Esophagus muscularis mucosa (tissue), 4 donors: ENCODE measurements at regions of chr5 and their contacts with region 1.

Region 1: DNA sequence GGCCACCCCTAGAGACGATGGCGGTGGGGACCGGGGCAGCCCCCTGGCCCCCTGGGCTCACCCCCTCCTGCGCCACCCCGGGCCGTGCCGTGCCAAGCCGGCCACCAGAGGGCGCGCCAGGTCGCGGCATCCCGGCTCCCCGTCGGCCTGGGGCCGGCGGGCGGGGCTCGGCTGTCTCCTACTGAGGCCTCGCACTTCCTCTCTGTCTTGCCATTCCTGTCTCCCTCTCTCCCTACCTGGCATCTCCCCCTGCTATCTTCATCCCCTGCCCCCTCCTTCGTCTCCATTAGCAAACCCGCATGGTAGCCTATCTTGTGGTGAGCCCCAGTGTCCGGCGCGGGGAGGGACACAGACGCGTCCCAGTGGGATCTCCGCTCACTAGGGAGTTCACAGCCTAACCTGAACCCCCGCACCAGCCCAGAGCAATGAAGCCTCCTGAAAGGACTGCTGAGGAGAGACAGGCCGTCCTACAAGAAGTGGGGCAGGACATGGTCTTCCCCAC is 29.8 kb upstream of the FABP6 start:
- DNase-seq: no peak
- H3K4me3 ChIP-seq: peak overlapping the region; percentile 44 to 62 (median 52)
- H3K27ac ChIP-seq: no peak overlapping the region
- H3K4me1 ChIP-seq: peaks cover 11 to 13% (median 11%) of the 10 kb centered on the region in 4 donors
- H3K27me3 ChIP-seq: no peaks in the 10 kb centered on the region
- CTCF ChIP-seq: peak; percentile 87 to 98 (median 95)
- EP300 ChIP-seq: no peak
- POLR2A ChIP-seq: no peak

Region 2: GRCh38 chr5:159712672-159713071 is 486.8 kb before region 1 on chr5:
- intact Hi-C with region 1: no loop called
- DNase-seq: no peak
- H3K4me3 ChIP-seq: no peak overlapping the region
- H3K27ac ChIP-seq: no peak overlapping the region
- H3K4me1 ChIP-seq: no peaks in the 10 kb centered on the region
- H3K27me3 ChIP-seq: no peaks in the 10 kb centered on the region
- CTCF ChIP-seq: no peak
- EP300 ChIP-seq: no peak
- POLR2A ChIP-seq: no peak

Region 3: DNA sequence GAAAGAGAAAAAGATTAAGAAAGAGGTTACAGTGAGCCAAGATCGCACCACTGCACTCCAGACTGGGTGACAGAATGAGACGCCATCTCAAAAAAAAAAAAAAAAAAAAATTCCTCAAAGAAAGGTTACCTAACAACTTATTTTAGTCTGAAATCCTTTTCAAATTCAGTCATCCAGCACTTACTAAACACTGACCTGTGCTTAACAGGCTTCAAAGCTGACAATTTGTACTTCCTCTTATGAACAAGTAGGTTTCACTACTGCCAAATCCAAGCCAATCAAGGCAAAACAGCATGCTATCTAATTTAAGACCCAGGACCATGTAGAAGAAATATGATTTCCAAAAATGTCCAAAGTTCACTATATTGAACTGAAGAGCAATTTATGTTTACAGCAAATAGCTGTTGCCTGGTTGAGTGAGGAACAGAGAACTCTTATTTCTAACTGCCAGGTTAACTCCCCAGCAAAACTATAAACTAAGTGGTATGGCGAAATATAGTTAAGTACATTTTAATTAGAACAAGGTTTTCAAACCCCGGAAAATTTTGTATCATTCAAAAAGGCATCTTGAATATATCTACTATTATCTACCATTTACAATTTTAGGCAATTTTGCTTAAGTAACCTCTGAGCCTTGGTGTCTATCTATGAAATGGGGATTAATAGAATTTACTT is 93.6 kb before region 1 on chr5:
- intact Hi-C with region 1: no loop called
- DNase-seq: no peak
- H3K4me3 ChIP-seq: no peak overlapping the region
- H3K27ac ChIP-seq: peak overlapping the region in 3 of 4 donors; percentile 3 to 50 (median 32)
- H3K4me1 ChIP-seq: peaks cover 5 to 31% (median 22%) of the 10 kb centered on the region in 4 donors
- H3K27me3 ChIP-seq: no peaks in the 10 kb centered on the region
- CTCF ChIP-seq: no peak
- EP300 ChIP-seq: no peak
- POLR2A ChIP-seq: no peak

Region 4: GRCh38 chr5:160342403-160342941 is 143.0 kb after region 1 on chr5:
- intact Hi-C with region 1: loop called (anchors 2 kb)
- DNase-seq: no peak
- H3K4me3 ChIP-seq: no peak overlapping the region
- H3K27ac ChIP-seq: no peak overlapping the region
- H3K4me1 ChIP-seq: peaks cover 0 to 8% (median 7%) of the 10 kb centered on the region in 4 donors
- H3K27me3 ChIP-seq: no peaks in the 10 kb centered on the region
- CTCF ChIP-seq: no peak
- EP300 ChIP-seq: no peak
- POLR2A ChIP-seq: no peak